ENCODE measurements at regions of chr3 and their contacts with region 1.

Region 1: GRCh38 chr3:29373131-29373680 is 92.3 kb downstream of the RBMS3 start:
- DNase-seq: no peak

Region 2: GRCh38 chr3:29311795-29312194 is 61.4 kb before region 1 on chr3:
- CTCF ChIA-PET with region 1: no interaction called
- POLR2A ChIA-PET with region 1: no interaction called
- DNase-seq: no peak

Region 3: GRCh38 chr3:29353807-29354206 is 19.4 kb before region 1 on chr3:
- CTCF ChIA-PET with region 1: interaction called, 10 read pairs
- POLR2A ChIA-PET with region 1: no interaction called
- DNase-seq: no peak